Heart left ventricle (tissue), 16 donors: ENCODE measurements at regions of chr3 and their contacts with region 1.

Region 1: GRCh38 chr3:5187156-5187919 is at the start of gene EDEM1:
- DNase-seq: peak; percentile 96 to 99 (median 96)
- ATAC-seq: peak; percentile 94 to 98 (median 96)
- H3K4me3 ChIP-seq: peak within 1 kb of the TSS; percentile 67 to 99 (median 96)
- H3K27ac ChIP-seq: peak within 1 kb of the TSS; percentile 68 to 99 (median 96)
- H3K4me1 ChIP-seq: peaks cover 0 to 79% (median 30%) of the 10 kb centered on the region in 12 donors
- H3K27me3 ChIP-seq: no peaks in the 10 kb centered on the region
- CTCF ChIP-seq: no peak
- POLR2A ChIP-seq: peak; percentile 35 to 82
- total RNA-seq, gene EDEM1: 6.8 to 24.6 (median 10.9) TPM

Region 2: GRCh38 chr3:5095879-5096278 is 91.5 kb before region 1 on chr3:
- intact Hi-C with region 1: no loop called
- DNase-seq: peak; percentile 48 to 69 (median 65)
- ATAC-seq: peak; percentile 47 to 90 (median 85)
- H3K4me3 ChIP-seq: peak overlapping the region in 10 of 12 donors; percentile 5 to 53 (median 34)
- H3K27ac ChIP-seq: peak overlapping the region in 5 of 12 donors; percentile 1 to 31 (median 25)
- H3K4me1 ChIP-seq: peaks cover 0 to 16% (median 5%) of the 10 kb centered on the region in 12 donors
- H3K27me3 ChIP-seq: peaks cover 0 to 12% (median 0%) of the 10 kb centered on the region in 9 donors
- CTCF ChIP-seq: peak in 3 of 12 donors; percentile 8 to 31 (median 9)
- POLR2A ChIP-seq: no peak

Region 3: GRCh38 chr3:5122030-5122740 is 65.2 kb before region 1 on chr3 and contains the start of gene ARL8B:
- intact Hi-C with region 1: loop called (anchors 1 to 5 kb)
- DNase-seq: peak; percentile 91 to 97 (median 92)
- ATAC-seq: peak; percentile 97 to 99 (median 98)
- H3K4me3 ChIP-seq: peak within 1 kb of the TSS; percentile 80 to 100 (median 89)
- H3K27ac ChIP-seq: peak within 1 kb of the TSS; percentile 53 to 96 (median 90)
- H3K4me1 ChIP-seq: peaks cover 0 to 51% (median 39%) of the 10 kb centered on the region in 12 donors
- H3K27me3 ChIP-seq: no peaks in the 10 kb centered on the region
- CTCF ChIP-seq: peak; percentile 93 to 100 (median 98)
- POLR2A ChIP-seq: peak in 1 of 2 donors; percentile 57
- total RNA-seq, gene ARL8B: 43.5 to 77.1 (median 64.0) TPM

Region 4: GRCh38 chr3:5136211-5136918 is 51.0 kb before region 1 on chr3:
- intact Hi-C with region 1: loop called in 1 of 10 experiments (anchors 5 kb)
- DNase-seq: no peak
- ATAC-seq: peak in 2 of 4 donors; percentile 14 to 56
- H3K4me3 ChIP-seq: no peak overlapping the region
- H3K27ac ChIP-seq: peak overlapping the region in 2 of 12 donors; percentile 10 to 59
- H3K4me1 ChIP-seq: peaks cover 13 to 91% (median 48%) of the 10 kb centered on the region in 12 donors
- H3K27me3 ChIP-seq: no peaks in the 10 kb centered on the region
- CTCF ChIP-seq: peak in 9 of 12 donors; percentile 11 to 35 (median 27)
- POLR2A ChIP-seq: no peak

Region 5: DNA sequence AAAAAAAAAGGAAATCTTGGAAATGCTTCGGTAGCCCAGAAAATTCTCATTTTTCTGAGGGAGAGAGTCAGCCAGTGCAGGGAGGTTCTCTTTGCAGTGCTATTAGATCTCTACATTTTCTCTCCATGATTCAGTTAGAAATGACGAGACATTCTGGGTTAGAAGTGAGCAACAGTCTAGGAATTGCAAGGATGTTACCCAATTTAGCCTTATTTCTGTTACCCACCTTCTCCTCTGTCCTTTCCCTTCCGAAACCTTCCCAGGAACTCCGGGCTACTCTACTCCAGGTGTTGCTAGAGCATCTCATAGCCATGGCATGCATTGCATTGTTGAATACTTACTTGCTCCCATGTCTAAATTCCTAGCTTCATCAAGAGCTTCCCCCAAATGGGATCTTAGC is 107.0 kb after region 1 on chr3:
- intact Hi-C with region 1: no loop called
- DNase-seq: no peak
- ATAC-seq: no peak
- H3K4me3 ChIP-seq: no peak overlapping the region
- H3K27ac ChIP-seq: no peak overlapping the region
- H3K4me1 ChIP-seq: peaks cover 0 to 4% (median 0%) of the 10 kb centered on the region in 12 donors
- H3K27me3 ChIP-seq: no peaks in the 10 kb centered on the region
- CTCF ChIP-seq: no peak
- POLR2A ChIP-seq: no peak

Region 6: DNA sequence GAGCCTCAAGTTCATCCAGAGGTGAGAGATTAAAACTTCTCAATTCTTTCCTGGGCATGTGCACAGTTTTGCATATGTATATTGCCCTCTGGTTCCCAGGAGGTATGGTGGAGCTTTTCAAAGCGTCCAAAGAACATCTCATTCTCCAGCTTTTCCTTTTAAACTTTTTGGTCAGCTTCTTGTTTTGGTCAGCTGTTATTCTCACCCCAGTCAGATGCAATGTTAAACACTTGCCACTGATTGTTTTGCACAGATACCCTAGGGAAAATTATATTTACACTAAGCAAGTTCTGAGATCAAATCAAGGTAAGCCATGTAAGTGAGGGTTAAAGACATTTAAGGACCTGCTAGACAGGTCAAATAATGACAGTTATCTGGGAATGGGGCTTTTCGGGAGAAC is 261.5 kb after region 1 on chr3:
- intact Hi-C with region 1: no loop called
- DNase-seq: no peak
- ATAC-seq: no peak
- H3K4me3 ChIP-seq: no peak overlapping the region
- H3K27ac ChIP-seq: no peak overlapping the region
- H3K4me1 ChIP-seq: no peaks in the 10 kb centered on the region
- H3K27me3 ChIP-seq: no peaks in the 10 kb centered on the region
- CTCF ChIP-seq: no peak
- POLR2A ChIP-seq: no peak